Kidney (tissue), 22 donors: ENCODE measurements at regions of chr4 and their contacts with region 1.

Region 1: DNA sequence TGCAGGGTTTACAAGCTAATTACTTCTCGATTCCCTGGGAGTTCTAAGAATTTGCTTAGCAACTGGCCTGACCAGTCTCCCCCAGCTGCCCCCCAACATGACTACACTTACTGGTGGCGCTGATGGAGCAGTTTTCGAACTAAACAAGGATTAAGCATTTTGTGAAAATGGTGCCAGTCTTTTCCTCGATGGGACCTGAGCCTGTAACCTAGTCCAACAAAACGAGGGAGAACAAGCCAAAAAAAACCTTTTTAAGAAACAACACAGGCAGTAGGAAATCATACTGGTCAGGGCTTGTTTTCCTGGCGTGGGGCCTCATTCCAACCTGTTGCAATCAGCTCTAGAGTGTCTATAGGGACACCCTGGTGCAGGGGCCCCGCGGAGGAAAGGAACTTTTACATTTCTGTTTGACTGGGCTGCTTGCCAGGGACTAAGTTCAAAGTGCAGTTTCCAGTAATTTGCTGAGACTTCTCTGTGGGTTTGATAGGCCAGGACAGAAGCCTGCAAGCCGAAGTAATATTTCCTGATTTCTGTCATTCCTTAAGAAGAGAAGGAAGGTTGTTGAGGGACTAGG is 158.7 kb downstream of the SPRY1 start:
- DNase-seq: peak; percentile 88 to 96 (median 94)
- H3K4me3 ChIP-seq: peak overlapping the region in 1 of 3 donors; percentile 29
- H3K27ac ChIP-seq: peak overlapping the region; percentile 84 to 92
- H3K4me1 ChIP-seq: peaks cover 11 to 38% (median 14%) of the 10 kb centered on the region in 3 donors
- H3K27me3 ChIP-seq: no peaks in the 10 kb centered on the region
- CTCF ChIP-seq: no peak

Region 2: DNA sequence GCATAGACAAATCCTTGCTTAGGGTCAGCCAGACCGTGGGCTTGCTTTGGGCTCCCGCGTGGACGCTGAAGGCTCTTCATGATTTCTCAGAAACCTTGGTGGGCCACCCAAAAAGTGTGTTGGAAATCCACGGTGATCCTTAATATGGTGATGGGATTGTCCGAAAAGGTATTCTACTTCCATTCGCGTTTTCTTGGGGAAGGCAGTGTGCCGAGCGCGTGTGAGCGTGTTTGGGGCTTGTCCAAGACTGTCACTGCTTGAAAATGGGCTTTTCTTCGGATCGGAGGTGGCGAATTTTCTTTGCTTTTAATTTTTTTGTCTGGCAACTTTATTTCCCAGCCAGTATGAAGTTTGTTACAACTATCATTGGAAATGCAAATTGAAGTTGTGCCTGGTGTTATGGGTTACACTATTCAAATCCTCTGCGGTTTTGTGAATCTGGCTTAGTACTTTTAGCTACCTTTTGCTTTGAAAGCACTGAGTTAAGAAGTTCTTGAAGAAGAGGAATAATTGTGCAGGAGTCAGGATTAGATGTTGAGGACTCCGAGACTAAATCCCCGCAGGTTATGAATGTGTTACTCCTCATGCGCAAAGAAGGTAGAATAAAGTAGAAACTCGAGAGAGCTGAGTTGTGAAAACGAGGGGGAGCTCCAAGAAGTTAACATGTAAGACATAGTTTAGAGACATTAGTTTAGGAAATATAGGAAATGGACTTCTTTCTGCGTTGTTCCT is 155.5 kb before region 1 on chr4:
- intact Hi-C with region 1: loop called (anchors 10 kb)
- DNase-seq: peak in 3 of 5 donors; percentile 37 to 85 (median 73)
- H3K4me3 ChIP-seq: peak overlapping the region; percentile 80 to 99 (median 84)
- H3K27ac ChIP-seq: peak overlapping the region; percentile 88 to 94
- H3K4me1 ChIP-seq: peaks cover 4 to 9% (median 6%) of the 10 kb centered on the region in 3 donors
- H3K27me3 ChIP-seq: no peaks in the 10 kb centered on the region
- CTCF ChIP-seq: no peak